Naive thymus-derived CD4-positive, alpha-beta T cell (primary cell): ENCODE measurements at regions of chr10 and their contacts with region 1.

Region 1: DNA sequence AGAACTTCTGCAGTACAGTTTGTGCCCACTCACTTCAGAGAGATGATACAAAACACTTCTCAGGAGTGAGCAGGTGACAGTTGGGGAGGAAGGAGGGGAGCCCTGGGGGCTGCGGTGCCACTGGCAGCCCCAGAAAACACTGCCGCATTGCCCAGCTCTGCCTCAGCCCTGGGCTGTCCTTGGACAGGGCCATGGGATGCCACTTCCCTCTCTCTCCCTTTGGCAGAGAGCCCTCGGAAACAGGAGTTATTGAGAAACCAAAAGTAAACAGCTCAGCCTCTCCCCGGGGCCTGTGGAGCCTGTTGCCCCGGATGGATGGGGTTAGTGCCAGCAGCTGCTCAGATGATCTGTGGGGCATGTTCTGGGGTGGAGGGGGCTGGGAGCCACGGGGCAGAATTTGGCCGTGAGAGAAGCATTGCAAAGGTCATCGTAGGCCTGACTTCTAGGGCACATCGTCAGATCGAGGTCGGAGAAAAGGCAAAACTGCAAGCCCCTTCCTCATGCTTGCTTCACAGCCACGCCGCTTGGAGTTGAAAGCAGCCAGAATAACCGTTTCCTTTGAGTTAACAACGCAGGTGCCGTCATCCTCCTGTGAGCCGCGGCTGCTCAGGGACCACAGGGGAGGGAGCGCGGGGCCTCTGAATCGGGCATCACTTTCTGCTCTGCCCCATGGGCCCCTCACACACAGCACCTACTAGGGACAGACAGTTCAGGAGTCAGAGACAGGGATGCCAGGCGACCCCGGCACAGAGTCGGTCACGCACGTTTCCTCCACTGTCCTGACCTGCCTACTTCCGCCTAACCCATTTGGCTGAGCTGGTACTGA is 256.4 kb downstream of the CAMK1D start:
- DNase-seq: peak; percentile 45 to 80 (median 73)
- ATAC-seq: peak; percentile 87
- H3K4me3 ChIP-seq: peak overlapping the region; percentile 67
- H3K4me3 Mint-ChIP-seq: peak overlapping the region; percentile 78 to 94 (median 89)
- H3K27ac ChIP-seq: peak overlapping the region; percentile 81
- H3K27ac Mint-ChIP-seq: peak overlapping the region; percentile 93 to 100 (median 98)
- H3K4me1 ChIP-seq: peaks cover 9 to 14% of the 10 kb centered on the region in 2 donors
- H3K4me1 Mint-ChIP-seq: peaks cover 10 to 62% (median 41%) of the 10 kb centered on the region in 7 donors
- H3K27me3 ChIP-seq: no peaks in the 10 kb centered on the region
- H3K27me3 Mint-ChIP-seq: no peaks in the 10 kb centered on the region

Region 2: GRCh38 chr10:12186323-12186722 is 419.5 kb before region 1 on chr10:
- CTCF ChIA-PET with region 1: no interaction called
- POLR2A ChIA-PET with region 1: no interaction called
- intact Hi-C with region 1: no loop called
- DNase-seq: no peak
- ATAC-seq: no peak
- H3K4me3 ChIP-seq: no peak overlapping the region
- H3K4me3 Mint-ChIP-seq: no peak overlapping the region
- H3K27ac ChIP-seq: no peak overlapping the region
- H3K27ac Mint-ChIP-seq: peak overlapping the region in 3 of 9 donors; percentile 24 to 65 (median 34)
- H3K4me1 ChIP-seq: peaks cover 0 to 4% of the 10 kb centered on the region in 2 donors
- H3K4me1 Mint-ChIP-seq: peaks cover 2 to 55% (median 17%) of the 10 kb centered on the region in 7 donors
- H3K27me3 ChIP-seq: no peaks in the 10 kb centered on the region
- H3K27me3 Mint-ChIP-seq: no peaks in the 10 kb centered on the region

Region 3: GRCh38 chr10:12484941-12485805 is 120.6 kb before region 1 on chr10:
- CTCF ChIA-PET with region 1: no interaction called
- POLR2A ChIA-PET with region 1: no interaction called
- intact Hi-C with region 1: loop called in 1 of 2 experiments (anchors 5 kb)
- DNase-seq: peak in 7 of 9 donors; percentile 13 to 38 (median 27)
- ATAC-seq: peak; percentile 70
- H3K4me3 ChIP-seq: no peak overlapping the region
- H3K4me3 Mint-ChIP-seq: peak overlapping the region; percentile 45 to 77 (median 71)
- H3K27ac ChIP-seq: no peak overlapping the region
- H3K27ac Mint-ChIP-seq: peak overlapping the region; percentile 61 to 90 (median 84)
- H3K4me1 ChIP-seq: peaks cover 0 to 24% of the 10 kb centered on the region in 2 donors
- H3K4me1 Mint-ChIP-seq: peaks cover 15 to 70% (median 47%) of the 10 kb centered on the region in 7 donors
- H3K27me3 ChIP-seq: no peaks in the 10 kb centered on the region
- H3K27me3 Mint-ChIP-seq: no peaks in the 10 kb centered on the region

Region 4: GRCh38 chr10:12549295-12549694 is 56.5 kb before region 1 on chr10:
- CTCF ChIA-PET with region 1: no interaction called
- POLR2A ChIA-PET with region 1: interaction called, 4 read pairs
- intact Hi-C with region 1: loop called in 1 of 2 experiments (anchors 1 kb)
- DNase-seq: no peak
- ATAC-seq: no peak
- H3K4me3 ChIP-seq: no peak overlapping the region
- H3K4me3 Mint-ChIP-seq: peak overlapping the region in 2 of 10 donors; percentile 17 to 45
- H3K27ac ChIP-seq: no peak overlapping the region
- H3K27ac Mint-ChIP-seq: peak overlapping the region in 6 of 9 donors; percentile 21 to 54 (median 39)
- H3K4me1 ChIP-seq: peaks cover 0 to 13% of the 10 kb centered on the region in 2 donors
- H3K4me1 Mint-ChIP-seq: peaks cover 21 to 54% (median 46%) of the 10 kb centered on the region in 7 donors
- H3K27me3 ChIP-seq: no peaks in the 10 kb centered on the region
- H3K27me3 Mint-ChIP-seq: no peaks in the 10 kb centered on the region

Region 5: GRCh38 chr10:12588120-12588860 is 17.5 kb before region 1 on chr10:
- CTCF ChIA-PET with region 1: no interaction called
- POLR2A ChIA-PET with region 1: interaction called, 10 read pairs
- intact Hi-C with region 1: loop called in 1 of 2 experiments (anchors 2 kb)
- DNase-seq: peak in 7 of 9 donors; percentile 40 to 76 (median 71)
- ATAC-seq: peak; percentile 81
- H3K4me3 ChIP-seq: peak overlapping the region; percentile 36
- H3K4me3 Mint-ChIP-seq: peak overlapping the region; percentile 67 to 91 (median 86)
- H3K27ac ChIP-seq: no peak overlapping the region
- H3K27ac Mint-ChIP-seq: peak overlapping the region; percentile 41 to 92 (median 84)
- H3K4me1 ChIP-seq: peaks cover 18 to 41% of the 10 kb centered on the region in 2 donors
- H3K4me1 Mint-ChIP-seq: peaks cover 35 to 89% (median 79%) of the 10 kb centered on the region in 7 donors
- H3K27me3 ChIP-seq: no peaks in the 10 kb centered on the region
- H3K27me3 Mint-ChIP-seq: no peaks in the 10 kb centered on the region

Region 6: DNA sequence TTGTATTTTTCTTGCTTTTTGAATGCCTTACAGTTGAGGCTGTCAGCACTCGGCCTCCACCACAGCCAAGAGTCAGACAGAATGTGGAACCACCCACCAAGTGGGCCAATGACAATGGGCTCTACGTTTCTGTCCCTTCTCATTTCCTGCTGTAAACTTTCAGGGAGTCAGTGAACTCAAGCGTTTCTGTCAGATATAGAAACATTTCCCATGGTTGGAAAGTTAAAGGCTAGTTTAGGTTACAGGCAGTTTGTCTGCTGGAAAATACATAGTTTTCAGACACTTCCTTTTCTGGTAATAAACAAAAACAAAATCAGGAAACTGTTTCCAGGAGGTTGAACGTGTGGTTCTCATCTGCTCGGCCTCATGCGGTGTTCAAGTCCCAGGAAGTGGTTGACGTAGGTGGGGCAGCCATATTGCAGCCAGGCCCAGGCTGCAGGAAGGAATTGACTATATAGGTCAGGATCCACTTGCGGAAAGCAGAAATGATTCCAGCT is 11.3 kb before region 1 on chr10:
- CTCF ChIA-PET with region 1: no interaction called
- POLR2A ChIA-PET with region 1: interaction called, 12 read pairs
- intact Hi-C with region 1: loop called (anchors 1 kb)
- DNase-seq: peak in 8 of 9 donors; percentile 25 to 66 (median 52)
- ATAC-seq: peak; percentile 78
- H3K4me3 ChIP-seq: no peak overlapping the region
- H3K4me3 Mint-ChIP-seq: peak overlapping the region; percentile 61 to 90 (median 72)
- H3K27ac ChIP-seq: peak overlapping the region; percentile 41
- H3K27ac Mint-ChIP-seq: peak overlapping the region; percentile 90 to 99 (median 94)
- H3K4me1 ChIP-seq: peaks cover 15 to 65% of the 10 kb centered on the region in 2 donors
- H3K4me1 Mint-ChIP-seq: peaks cover 43 to 100% (median 94%) of the 10 kb centered on the region in 7 donors
- H3K27me3 ChIP-seq: no peaks in the 10 kb centered on the region
- H3K27me3 Mint-ChIP-seq: no peaks in the 10 kb centered on the region

Region 7: DNA sequence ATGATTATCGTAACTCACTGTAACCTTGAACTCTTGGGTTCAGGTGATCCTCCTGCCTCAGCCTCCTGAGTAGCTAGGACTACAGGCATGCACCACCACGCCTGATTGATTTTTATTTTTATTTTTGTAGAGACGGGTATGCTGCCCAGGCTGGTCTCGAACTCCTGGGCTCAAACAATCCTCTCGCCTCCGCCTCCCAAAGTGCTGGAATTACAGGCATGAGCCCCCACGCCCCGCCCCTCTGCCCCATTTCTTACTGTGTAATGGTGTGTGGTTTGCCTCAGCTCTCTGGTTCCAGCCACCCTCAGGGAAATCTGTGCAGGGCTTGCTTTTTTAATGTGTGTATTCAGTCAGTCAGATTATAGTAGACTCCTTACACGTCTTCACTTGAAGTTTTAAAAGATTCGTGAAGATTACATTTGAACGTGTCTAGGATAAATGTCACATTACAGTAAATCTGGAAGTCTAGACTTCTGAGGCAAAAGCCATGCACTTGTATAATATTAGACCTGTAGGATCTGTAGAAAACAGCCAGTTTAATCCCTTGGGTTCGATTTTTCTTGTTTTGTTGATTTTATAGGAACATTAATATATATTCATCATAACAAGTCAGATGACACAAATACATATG is 19.7 kb after region 1 on chr10:
- CTCF ChIA-PET with region 1: interaction called, 3 read pairs
- POLR2A ChIA-PET with region 1: no interaction called
- intact Hi-C with region 1: loop called in 1 of 2 experiments (anchors 1 kb)
- DNase-seq: no peak
- ATAC-seq: no peak
- H3K4me3 ChIP-seq: no peak overlapping the region
- H3K4me3 Mint-ChIP-seq: no peak overlapping the region
- H3K27ac ChIP-seq: no peak overlapping the region
- H3K27ac Mint-ChIP-seq: no peak overlapping the region
- H3K4me1 ChIP-seq: no peaks in the 10 kb centered on the region
- H3K4me1 Mint-ChIP-seq: peaks cover 12 to 39% (median 30%) of the 10 kb centered on the region in 7 donors
- H3K27me3 ChIP-seq: no peaks in the 10 kb centered on the region
- H3K27me3 Mint-ChIP-seq: peaks cover 0 to 2% (median 0%) of the 10 kb centered on the region in 5 donors

Region 8: DNA sequence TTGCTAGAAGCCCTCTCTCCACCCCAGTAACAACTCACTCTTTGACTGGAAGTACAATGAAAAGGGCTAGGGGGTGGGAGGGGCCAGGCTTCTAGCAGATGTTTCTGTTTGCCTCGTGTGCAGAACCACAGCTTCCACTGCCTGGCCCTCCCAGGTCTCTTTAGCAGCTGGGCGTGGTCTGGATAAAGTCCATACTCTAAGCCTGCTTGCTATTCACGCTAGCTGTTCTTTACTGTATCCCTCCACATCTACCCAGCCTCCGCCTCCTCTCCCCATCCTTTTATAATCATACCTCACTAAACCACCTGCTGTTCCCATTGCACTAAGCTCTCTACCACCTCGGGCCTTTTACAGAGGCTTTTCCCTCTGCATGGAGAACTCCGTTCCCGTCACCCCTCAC is 32.3 kb after region 1 on chr10:
- CTCF ChIA-PET with region 1: no interaction called
- POLR2A ChIA-PET with region 1: no interaction called
- intact Hi-C with region 1: loop called in 1 of 2 experiments (anchors 1 kb)
- DNase-seq: peak in 1 of 9 donors; percentile 14
- ATAC-seq: no peak
- H3K4me3 ChIP-seq: no peak overlapping the region
- H3K4me3 Mint-ChIP-seq: peak overlapping the region in 8 of 10 donors; percentile 1 to 69 (median 24)
- H3K27ac ChIP-seq: no peak overlapping the region
- H3K27ac Mint-ChIP-seq: peak overlapping the region in 6 of 9 donors; percentile 16 to 90 (median 54)
- H3K4me1 ChIP-seq: peaks cover 0 to 20% of the 10 kb centered on the region in 2 donors
- H3K4me1 Mint-ChIP-seq: peaks cover 24 to 63% (median 51%) of the 10 kb centered on the region in 7 donors
- H3K27me3 ChIP-seq: no peaks in the 10 kb centered on the region
- H3K27me3 Mint-ChIP-seq: no peaks in the 10 kb centered on the region

Region 9: GRCh38 chr10:12670004-12670403 is 64.2 kb after region 1 on chr10:
- CTCF ChIA-PET with region 1: no interaction called
- POLR2A ChIA-PET with region 1: no interaction called
- intact Hi-C with region 1: no loop called
- DNase-seq: no peak
- ATAC-seq: no peak
- H3K4me3 ChIP-seq: no peak overlapping the region
- H3K4me3 Mint-ChIP-seq: no peak overlapping the region
- H3K27ac ChIP-seq: no peak overlapping the region
- H3K27ac Mint-ChIP-seq: no peak overlapping the region
- H3K4me1 ChIP-seq: no peaks in the 10 kb centered on the region
- H3K4me1 Mint-ChIP-seq: peaks cover 0 to 3% (median 0%) of the 10 kb centered on the region in 7 donors
- H3K27me3 ChIP-seq: no peaks in the 10 kb centered on the region
- H3K27me3 Mint-ChIP-seq: no peaks in the 10 kb centered on the region